HEK293T (cell line): ENCODE measurements at regions of chr4 and their contacts with region 1.

Region 1: DNA sequence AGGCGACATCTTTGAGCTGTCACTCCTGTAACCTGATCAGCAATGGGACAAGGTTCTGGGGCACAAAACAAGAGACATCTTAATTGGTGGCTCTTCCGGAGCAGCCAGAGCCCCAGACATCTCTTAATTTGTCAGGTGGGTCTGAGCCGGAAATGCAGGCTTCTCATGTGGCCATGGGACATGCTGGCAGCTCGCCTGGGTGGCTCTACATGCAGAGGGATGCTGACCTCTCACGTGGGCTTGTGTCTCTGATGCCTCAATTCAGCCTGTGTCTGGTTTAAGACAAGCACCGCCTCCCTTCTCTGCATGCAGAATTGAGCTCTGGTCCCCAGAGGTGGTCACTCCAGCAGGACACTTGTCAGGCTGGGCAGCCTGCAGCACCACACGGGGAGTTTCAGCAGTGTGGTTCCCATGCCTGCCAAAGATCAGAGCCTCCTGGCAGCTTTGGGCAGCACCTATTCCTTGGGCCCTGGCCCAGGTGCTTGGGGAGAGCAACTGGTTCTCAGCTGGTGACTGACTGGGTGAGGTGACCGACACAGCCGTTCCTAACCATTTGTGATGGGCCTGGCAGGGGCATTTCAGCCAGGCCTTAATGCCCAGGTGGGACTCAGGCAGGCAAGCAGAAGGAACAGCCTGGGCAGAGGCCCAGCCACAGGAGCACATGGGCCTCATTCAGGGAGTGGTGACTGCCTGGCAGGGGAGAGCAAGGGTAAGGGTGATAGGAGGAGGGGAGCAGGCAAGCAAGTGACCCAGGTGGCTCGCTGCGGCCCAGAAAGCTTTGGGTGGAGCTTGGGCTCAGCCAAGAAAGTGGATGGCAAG is 53.4 kb downstream of the HMX1 start:
- DNase-seq: no peak

Region 2: DNA sequence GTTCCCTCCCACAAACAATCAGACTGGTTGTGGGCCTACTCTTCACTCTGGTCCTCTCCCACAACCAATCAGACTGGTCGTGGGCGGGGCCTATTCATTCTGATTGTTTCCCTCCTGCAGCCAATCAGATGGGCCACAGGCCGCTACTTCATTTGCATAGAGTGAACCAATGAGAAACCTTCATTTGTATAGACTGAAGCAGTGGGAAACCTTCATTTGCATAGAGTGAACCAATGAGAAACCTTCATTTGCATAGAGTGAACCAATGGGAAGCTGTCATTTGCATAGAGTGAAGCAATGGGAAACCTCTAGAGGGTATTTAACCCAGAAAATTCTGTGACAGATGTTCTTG is 322.4 kb before region 1 on chr4:
- CTCF ChIA-PET with region 1: no interaction called
- POLR2A ChIA-PET with region 1: no interaction called
- DNase-seq: no peak

Region 3: GRCh38 chr4:8795774-8796495 is 22.3 kb before region 1 on chr4:
- CTCF ChIA-PET with region 1: no interaction called
- POLR2A ChIA-PET with region 1: interaction called, 15 read pairs
- DNase-seq: no peak

Region 4: GRCh38 chr4:8837181-8837841 is 19.0 kb after region 1 on chr4:
- CTCF ChIA-PET with region 1: no interaction called
- POLR2A ChIA-PET with region 1: no interaction called
- DNase-seq: no peak

Region 5: GRCh38 chr4:8871417-8872401 is 53.4 kb after region 1 on chr4 and contains the start of gene HMX1:
- CTCF ChIA-PET with region 1: no interaction called
- POLR2A ChIA-PET with region 1: no interaction called
- DNase-seq: peak; percentile 98